GM12878 (cell line): ENCODE measurements at regions of chr12 and their contacts with region 1.

Region 1: GRCh38 chr12:64256166-64256800 is 34.2 kb upstream of the KICS2 start:
- DNase-seq: no peak
- ATAC-seq: peak; percentile 63
- H3K4me3 ChIP-seq: no peak overlapping the region
- H3K27ac ChIP-seq: no peak overlapping the region
- H3K4me1 ChIP-seq: no peaks in the 10 kb centered on the region
- H3K27me3 ChIP-seq: no peaks in the 10 kb centered on the region
- CTCF ChIP-seq: peak; percentile 38 to 72 (median 46); a peak in 5 of 6 replicates
- EP300 ChIP-seq: no peak
- POLR2A ChIP-seq: no peak
- RAD21 ChIP-seq: peak; percentile 91

Region 2: GRCh38 chr12:63420206-63420644 is 836.1 kb before region 1 on chr12:
- CTCF ChIA-PET with region 1: interaction called, 3 read pairs
- POLR2A ChIA-PET with region 1: no interaction called
- RAD21 ChIA-PET with region 1: no interaction called
- SMC1A ChIA-PET with region 1: no interaction called
- in situ Hi-C with region 1: loop called (anchors 25 kb)
- intact Hi-C with region 1: loop called (anchors 10 kb)
- DNase-seq: peak; percentile 24
- ATAC-seq: peak; percentile 99
- H3K4me3 ChIP-seq: no peak overlapping the region
- H3K27ac ChIP-seq: no peak overlapping the region
- H3K4me1 ChIP-seq: no peaks in the 10 kb centered on the region
- H3K27me3 ChIP-seq: no peaks in the 10 kb centered on the region
- CTCF ChIP-seq: peak; percentile 57 to 75 (median 59); a peak in 5 of 6 replicates
- EP300 ChIP-seq: no peak
- POLR2A ChIP-seq: no peak
- RAD21 ChIP-seq: peak; percentile 66

Region 3: DNA sequence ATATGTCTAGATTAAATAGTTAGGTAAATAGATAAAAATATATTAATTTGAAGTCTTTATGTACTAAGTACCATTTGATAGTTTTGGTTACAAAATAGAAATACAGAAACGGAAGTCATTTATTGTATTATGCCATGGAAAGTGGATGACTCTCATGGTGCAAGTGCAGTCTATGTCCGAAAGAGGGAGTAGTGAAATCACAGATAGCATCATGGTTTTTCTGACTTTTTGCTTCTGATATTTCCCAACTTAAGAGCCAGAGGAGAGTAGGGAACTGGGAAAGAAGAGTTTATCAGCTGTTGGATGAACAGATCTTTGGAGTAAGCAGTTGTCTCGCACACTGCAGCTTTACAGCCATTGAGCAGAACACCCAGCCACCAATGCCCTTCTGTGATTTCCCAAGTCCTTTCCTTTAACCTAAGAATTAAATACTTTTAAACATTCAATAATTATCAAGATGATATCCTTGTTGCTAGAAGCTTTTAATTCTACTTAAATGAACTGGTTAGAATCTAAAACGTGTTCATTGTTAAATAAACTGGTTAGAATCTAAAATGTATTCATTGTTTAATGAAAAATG is 430.2 kb before region 1 on chr12:
- CTCF ChIA-PET with region 1: interaction called, 15 read pairs
- POLR2A ChIA-PET with region 1: no interaction called
- RAD21 ChIA-PET with region 1: no interaction called
- SMC1A ChIA-PET with region 1: interaction called, 9 read pairs
- in situ Hi-C with region 1: no loop called
- intact Hi-C with region 1: loop called (anchors 1 kb)
- DNase-seq: no peak
- ATAC-seq: peak; percentile 81
- H3K4me3 ChIP-seq: no peak overlapping the region
- H3K27ac ChIP-seq: no peak overlapping the region
- H3K4me1 ChIP-seq: no peaks in the 10 kb centered on the region
- H3K27me3 ChIP-seq: no peaks in the 10 kb centered on the region
- CTCF ChIP-seq: peak; percentile 71 to 77 (median 74)
- EP300 ChIP-seq: no peak
- POLR2A ChIP-seq: no peak
- RAD21 ChIP-seq: peak; percentile 80

Region 4: GRCh38 chr12:63843721-63844390 is 412.4 kb before region 1 on chr12:
- CTCF ChIA-PET with region 1: interaction called, 29 read pairs
- POLR2A ChIA-PET with region 1: interaction called, 3 read pairs
- RAD21 ChIA-PET with region 1: interaction called, 9 read pairs
- SMC1A ChIA-PET with region 1: interaction called, 13 read pairs
- in situ Hi-C with region 1: loop called (anchors 5 kb)
- intact Hi-C with region 1: loop called (anchors 1 kb)
- DNase-seq: peak; percentile 28
- ATAC-seq: peak; percentile 96
- H3K4me3 ChIP-seq: peak overlapping the region; percentile 81
- H3K27ac ChIP-seq: no peak overlapping the region
- H3K4me1 ChIP-seq: peaks cover 5% of the 10 kb centered on the region; the same call in 1 of the 2 replicates
- H3K27me3 ChIP-seq: peaks cover 2 to 6% of the 10 kb centered on the region in 2 experiments; a peak in 3 of 4 replicates
- CTCF ChIP-seq: peak; percentile 93 to 98 (median 94)
- EP300 ChIP-seq: no peak
- POLR2A ChIP-seq: peak; percentile 34; the same call in 1 of the 2 replicates
- RAD21 ChIP-seq: peak; percentile 94

Region 5: GRCh38 chr12:64225626-64226025 is 30.7 kb before region 1 on chr12:
- CTCF ChIA-PET with region 1: no interaction called
- POLR2A ChIA-PET with region 1: no interaction called
- RAD21 ChIA-PET with region 1: no interaction called
- SMC1A ChIA-PET with region 1: no interaction called
- in situ Hi-C with region 1: no loop called
- intact Hi-C with region 1: no loop called
- DNase-seq: no peak
- ATAC-seq: no peak
- H3K4me3 ChIP-seq: no peak overlapping the region
- H3K27ac ChIP-seq: no peak overlapping the region
- H3K4me1 ChIP-seq: no peaks in the 10 kb centered on the region
- H3K27me3 ChIP-seq: 0 out of 4 replicates have a peak, but pooled peaks cover 0 to 5% of the 10 kb centered on the region in 2 experiments
- CTCF ChIP-seq: no peak
- EP300 ChIP-seq: no peak
- POLR2A ChIP-seq: no peak
- RAD21 ChIP-seq: no peak